WTC11 (cell line): ENCODE measurements at regions of chr17 and their contacts with region 1.

Region 1: DNA sequence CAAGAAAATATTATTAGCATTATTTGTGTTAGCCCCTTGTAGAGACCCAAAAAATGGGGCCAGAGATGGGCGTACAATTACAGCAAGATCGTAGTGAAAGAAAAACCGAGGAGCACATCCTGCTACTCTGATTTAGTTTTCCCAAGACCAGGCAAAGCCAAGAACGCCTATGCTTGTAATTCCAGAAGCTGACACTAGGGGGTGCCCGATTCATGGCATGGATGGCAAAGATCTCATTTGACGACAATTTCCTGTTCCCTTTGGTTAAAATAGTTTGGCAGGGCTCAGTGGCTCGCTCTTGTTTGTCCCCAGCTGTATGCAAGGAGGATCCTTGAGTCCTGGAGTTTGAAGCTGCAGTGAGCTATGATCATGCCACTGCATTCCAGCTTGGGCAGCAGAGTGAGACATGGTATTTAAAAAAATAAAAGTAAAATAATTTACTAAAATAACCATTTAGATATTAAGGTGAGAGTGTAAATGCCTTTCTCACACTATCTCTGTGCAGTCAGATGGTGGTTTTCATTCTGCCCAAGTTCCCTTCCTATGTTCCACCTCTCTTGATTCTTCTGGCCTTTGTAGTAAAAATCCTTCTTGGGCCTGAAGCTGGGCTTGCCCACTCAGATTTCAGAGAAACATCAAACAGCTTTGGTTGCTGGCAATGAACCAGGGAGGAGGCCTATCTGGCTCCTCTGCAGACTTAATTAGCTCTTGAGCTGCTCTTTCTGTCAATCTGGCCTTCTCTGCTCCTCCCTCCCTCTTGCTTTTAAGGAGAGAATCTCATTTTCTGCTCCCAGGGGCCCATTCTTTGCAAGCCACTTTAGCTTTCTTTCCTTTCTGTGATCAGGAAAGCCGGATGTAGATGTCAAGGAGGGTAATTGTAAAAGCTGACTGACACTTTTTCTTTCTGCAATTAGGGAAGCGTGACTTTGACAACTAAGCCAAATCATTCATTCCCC is 31.2 kb downstream of the TMEM238L start:
- DNase-seq: peak; percentile 89
- ATAC-seq: peak; percentile 76
- H3K4me3 Mint-ChIP-seq: no peak overlapping the region
- H3K27ac Mint-ChIP-seq: no peak overlapping the region
- H3K4me1 Mint-ChIP-seq: peaks cover 13% of the 10 kb centered on the region; the same call in 1 of the 2 replicates
- H3K27me3 Mint-ChIP-seq: no peaks in the 10 kb centered on the region; the same call in 1 of the 2 replicates
- CTCF ChIP-seq: peak; percentile 94

Region 2: GRCh38 chr17:10737168-10737622 is 35.5 kb before region 1 on chr17:
- CTCF ChIA-PET with region 1: interaction called, 19 read pairs
- POLR2A ChIA-PET with region 1: interaction called, 3 read pairs
- DNase-seq: peak; percentile 60
- ATAC-seq: peak; percentile 92
- H3K4me3 Mint-ChIP-seq: no peak overlapping the region
- H3K27ac Mint-ChIP-seq: no peak overlapping the region
- H3K4me1 Mint-ChIP-seq: peaks cover 21% of the 10 kb centered on the region
- H3K27me3 Mint-ChIP-seq: no peaks in the 10 kb centered on the region
- CTCF ChIP-seq: peak; percentile 26; the same call in 1 of the 2 replicates

Region 3: DNA sequence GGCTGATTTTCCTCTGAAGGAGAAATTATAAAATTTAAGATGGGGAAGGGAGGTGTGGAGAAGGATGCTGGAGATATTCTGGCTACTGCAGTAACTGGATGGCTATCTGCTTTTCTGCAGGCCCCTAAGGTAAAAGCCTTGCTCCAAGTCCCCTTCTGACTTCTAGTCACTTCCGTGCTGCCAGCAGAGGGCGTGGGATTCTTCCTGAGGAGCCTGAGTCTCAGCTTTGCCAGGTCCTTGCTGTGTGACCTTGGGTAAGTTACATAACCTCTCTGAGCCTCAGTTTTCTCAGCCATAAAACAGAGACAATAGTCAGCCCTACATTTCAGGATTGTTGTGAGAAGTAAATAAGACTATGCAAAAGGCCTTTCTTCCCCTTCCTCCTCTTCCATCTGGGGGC is 18.6 kb before region 1 on chr17:
- CTCF ChIA-PET with region 1: interaction called, 27 read pairs
- POLR2A ChIA-PET with region 1: interaction called, 3 read pairs
- DNase-seq: peak; percentile 80
- ATAC-seq: peak; percentile 48
- H3K4me3 Mint-ChIP-seq: no peak overlapping the region; the same call in 1 of the 2 replicates
- H3K27ac Mint-ChIP-seq: no peak overlapping the region
- H3K4me1 Mint-ChIP-seq: peaks cover 54% of the 10 kb centered on the region
- H3K27me3 Mint-ChIP-seq: no peaks in the 10 kb centered on the region
- CTCF ChIP-seq: 0 out of 2 replicates have a peak, but pooled peaks have one; percentile 18

Region 4: DNA sequence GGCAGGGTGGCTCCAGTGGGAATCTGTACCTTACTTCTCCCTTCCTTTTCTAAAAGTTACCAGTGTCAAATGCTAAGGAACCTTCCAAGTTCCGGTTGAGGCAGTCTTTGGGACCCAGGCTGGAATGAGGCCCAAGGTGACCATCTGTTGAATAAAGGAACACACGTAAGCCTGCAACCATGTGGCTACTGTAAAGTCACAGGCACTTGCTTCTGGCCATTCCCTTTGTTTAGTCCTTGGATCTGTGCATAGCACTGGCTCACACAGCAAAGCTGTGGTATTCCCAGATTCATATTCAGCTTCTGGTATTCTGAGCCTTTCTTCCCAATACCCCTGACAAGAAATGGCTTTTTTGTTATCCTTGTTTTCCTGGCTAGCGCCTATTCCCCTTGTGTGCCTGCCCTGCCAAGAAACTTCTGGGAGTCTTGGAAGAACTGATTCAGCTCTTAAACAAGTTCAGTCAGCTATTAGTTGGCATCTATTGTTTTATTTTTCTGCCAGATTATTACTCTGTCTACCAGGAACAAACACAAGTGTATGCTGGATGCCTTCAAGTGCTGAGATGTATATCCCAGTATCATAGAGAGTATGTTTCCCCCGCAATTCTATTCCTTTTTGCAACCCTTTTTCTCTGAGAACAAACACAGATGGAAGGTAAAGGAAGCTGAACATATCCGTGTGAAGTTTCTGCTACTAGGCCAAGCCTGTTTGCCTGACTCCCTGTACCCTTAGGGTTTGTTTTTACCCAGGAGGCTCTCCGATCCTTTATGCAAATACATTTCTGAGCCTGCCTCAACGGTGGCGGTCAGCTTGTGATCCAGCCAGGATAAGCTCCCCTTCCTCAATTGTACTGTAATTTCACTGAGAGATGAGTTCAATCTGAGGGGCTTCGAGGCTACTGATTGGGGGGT is 18.0 kb after region 1 on chr17:
- CTCF ChIA-PET with region 1: interaction called, 14 read pairs
- POLR2A ChIA-PET with region 1: no interaction called
- DNase-seq: no peak
- ATAC-seq: peak; percentile 38
- H3K4me3 Mint-ChIP-seq: no peak overlapping the region
- H3K27ac Mint-ChIP-seq: peak overlapping the region; percentile 2; the same call in 1 of the 2 replicates
- H3K4me1 Mint-ChIP-seq: peaks cover 50% of the 10 kb centered on the region
- H3K27me3 Mint-ChIP-seq: no peaks in the 10 kb centered on the region
- CTCF ChIP-seq: no peak

Region 5: DNA sequence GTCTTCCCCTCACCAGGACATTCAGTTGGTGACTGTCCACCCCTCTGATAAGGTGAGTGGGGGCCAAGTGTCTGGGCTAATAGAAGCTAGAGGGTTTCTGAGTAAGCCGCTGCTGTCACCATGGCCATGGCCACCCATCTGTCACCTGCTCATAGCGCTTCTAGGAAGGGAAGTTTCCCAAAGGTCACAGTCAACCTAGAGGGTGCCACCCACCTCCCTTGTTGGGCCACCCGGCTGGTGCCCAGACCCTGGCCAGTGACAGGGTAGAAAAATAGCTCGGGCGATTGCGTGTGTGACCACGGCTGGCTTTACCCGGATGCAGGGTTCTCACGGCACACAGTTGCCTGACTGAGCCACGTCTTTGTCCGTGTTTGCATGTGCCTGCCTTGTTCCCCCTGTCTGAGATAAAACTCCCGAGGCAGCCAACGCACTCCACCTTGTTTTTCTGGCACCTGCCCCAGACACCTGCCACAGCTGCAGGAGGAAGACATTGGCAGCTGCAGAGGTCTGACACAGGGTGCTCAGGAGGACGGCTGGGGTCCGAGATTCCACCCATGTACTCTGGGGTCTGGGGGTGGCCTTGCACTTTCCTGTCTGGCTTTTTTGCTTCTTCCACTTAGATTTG is 64.4 kb after region 1 on chr17:
- CTCF ChIA-PET with region 1: interaction called, 20 read pairs
- POLR2A ChIA-PET with region 1: no interaction called
- DNase-seq: no peak
- ATAC-seq: no peak
- H3K4me3 Mint-ChIP-seq: no peak overlapping the region
- H3K27ac Mint-ChIP-seq: no peak overlapping the region
- H3K4me1 Mint-ChIP-seq: peaks cover 18% of the 10 kb centered on the region
- H3K27me3 Mint-ChIP-seq: no peaks in the 10 kb centered on the region
- CTCF ChIP-seq: no peak